Heart left ventricle (tissue), 16 donors: ENCODE measurements at regions of chr3 and their contacts with region 1.

Region 1: GRCh38 chr3:69930564-69930963 is 69.0 kb upstream of the SAMMSON start:
- DNase-seq: peak in 1 of 5 donors; percentile 32
- ATAC-seq: peak in 3 of 4 donors; percentile 23 to 54 (median 31)
- H3K4me3 ChIP-seq: no peak overlapping the region
- H3K27ac ChIP-seq: no peak overlapping the region
- H3K4me1 ChIP-seq: peaks cover 0 to 54% (median 12%) of the 10 kb centered on the region in 12 donors
- H3K27me3 ChIP-seq: no peaks in the 10 kb centered on the region
- CTCF ChIP-seq: no peak
- POLR2A ChIP-seq: no peak

Region 2: GRCh38 chr3:69865920-69866679 is 64.5 kb before region 1 on chr3:
- intact Hi-C with region 1: loop called in 1 of 10 experiments (anchors 5 kb)
- DNase-seq: peak in 4 of 5 donors; percentile 67 to 84 (median 76)
- ATAC-seq: peak; percentile 98 to 99 (median 98)
- H3K4me3 ChIP-seq: peak overlapping the region in 11 of 12 donors; percentile 6 to 54 (median 45)
- H3K27ac ChIP-seq: peak overlapping the region; percentile 9 to 90 (median 75)
- H3K4me1 ChIP-seq: peaks cover 0 to 30% (median 9%) of the 10 kb centered on the region in 12 donors
- H3K27me3 ChIP-seq: no peaks in the 10 kb centered on the region
- CTCF ChIP-seq: no peak
- POLR2A ChIP-seq: no peak

Region 3: GRCh38 chr3:69999191-70000027 is 68.8 kb after region 1 on chr3 and contains the start of gene SAMMSON:
- intact Hi-C with region 1: no loop called
- DNase-seq: peak in 2 of 5 donors; percentile 28 to 46
- ATAC-seq: peak in 3 of 4 donors; percentile 46 to 72 (median 56)
- H3K4me3 ChIP-seq: peak within 1 kb of the TSS in 10 of 12 donors; percentile 4 to 54 (median 31)
- H3K27ac ChIP-seq: peak within 1 kb of the TSS in 5 of 12 donors; percentile 7 to 64 (median 43)
- H3K4me1 ChIP-seq: no peaks in the 10 kb centered on the region
- H3K27me3 ChIP-seq: no peaks in the 10 kb centered on the region
- CTCF ChIP-seq: no peak
- POLR2A ChIP-seq: no peak
- total RNA-seq, gene SAMMSON: not detected

Region 4: GRCh38 chr3:70078778-70079177 is 148.2 kb after region 1 on chr3:
- intact Hi-C with region 1: no loop called
- DNase-seq: no peak
- ATAC-seq: no peak
- H3K4me3 ChIP-seq: no peak overlapping the region
- H3K27ac ChIP-seq: no peak overlapping the region
- H3K4me1 ChIP-seq: peaks cover 0 to 5% (median 0%) of the 10 kb centered on the region in 12 donors
- H3K27me3 ChIP-seq: peaks cover 0 to 16% (median 0%) of the 10 kb centered on the region in 9 donors
- CTCF ChIP-seq: no peak
- POLR2A ChIP-seq: no peak